ENCODE measurements at regions of chr11 and their contacts with region 1.

Region 1: DNA sequence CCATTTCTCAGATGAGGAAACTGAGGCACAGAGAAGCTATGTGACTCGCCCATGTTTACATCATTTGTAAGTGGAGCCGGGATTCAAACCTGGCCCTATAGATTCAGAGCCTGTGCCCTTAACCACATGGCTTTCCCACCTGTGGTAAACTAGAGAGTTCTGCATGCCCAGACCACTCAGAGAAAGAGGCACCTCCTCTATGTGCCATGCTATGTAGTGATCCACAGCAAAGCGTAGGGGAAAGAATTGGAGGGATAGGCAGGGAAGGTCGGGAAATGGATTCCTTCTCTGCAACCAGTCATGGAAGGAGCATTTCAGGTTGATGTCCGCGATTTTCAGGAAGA is 15.4 kb upstream of the POU2AF2 start:
- DNase-seq: no peak
- ATAC-seq: peak; percentile 35
- H3K4me3 ChIP-seq: peak overlapping the region in 3 of 5 experiments; percentile 32 to 46 (median 36)
- H3K4me3 Mint-ChIP-seq: peak overlapping the region; percentile 79
- H3K27ac ChIP-seq: no peak overlapping the region
- H3K27ac Mint-ChIP-seq: peak overlapping the region; percentile 74
- H3K4me1 ChIP-seq: peaks cover 23 to 24% of the 10 kb centered on the region in 2 donors
- H3K4me1 Mint-ChIP-seq: peaks cover 37% of the 10 kb centered on the region
- H3K27me3 ChIP-seq: no peaks in the 10 kb centered on the region
- H3K27me3 Mint-ChIP-seq: no peaks in the 10 kb centered on the region
- CTCF ChIP-seq: no peak

Region 2: GRCh38 chr11:110199184-110199941 is 1030.7 kb before region 1 on chr11:
- CTCF ChIA-PET with region 1: interaction called, 7 read pairs
- POLR2A ChIA-PET with region 1: no interaction called
- intact Hi-C with region 1: loop called (anchors 1 kb)
- DNase-seq: no peak
- ATAC-seq: no peak
- H3K4me3 ChIP-seq: no peak overlapping the region
- H3K4me3 Mint-ChIP-seq: no peak overlapping the region
- H3K27ac ChIP-seq: no peak overlapping the region
- H3K27ac Mint-ChIP-seq: no peak overlapping the region
- H3K4me1 ChIP-seq: no peaks in the 10 kb centered on the region
- H3K4me1 Mint-ChIP-seq: no peaks in the 10 kb centered on the region
- H3K27me3 ChIP-seq: peaks cover 0 to 16% (median 11%) of the 10 kb centered on the region in 4 experiments
- H3K27me3 Mint-ChIP-seq: peaks cover 38% of the 10 kb centered on the region
- CTCF ChIP-seq: no peak

Region 3: DNA sequence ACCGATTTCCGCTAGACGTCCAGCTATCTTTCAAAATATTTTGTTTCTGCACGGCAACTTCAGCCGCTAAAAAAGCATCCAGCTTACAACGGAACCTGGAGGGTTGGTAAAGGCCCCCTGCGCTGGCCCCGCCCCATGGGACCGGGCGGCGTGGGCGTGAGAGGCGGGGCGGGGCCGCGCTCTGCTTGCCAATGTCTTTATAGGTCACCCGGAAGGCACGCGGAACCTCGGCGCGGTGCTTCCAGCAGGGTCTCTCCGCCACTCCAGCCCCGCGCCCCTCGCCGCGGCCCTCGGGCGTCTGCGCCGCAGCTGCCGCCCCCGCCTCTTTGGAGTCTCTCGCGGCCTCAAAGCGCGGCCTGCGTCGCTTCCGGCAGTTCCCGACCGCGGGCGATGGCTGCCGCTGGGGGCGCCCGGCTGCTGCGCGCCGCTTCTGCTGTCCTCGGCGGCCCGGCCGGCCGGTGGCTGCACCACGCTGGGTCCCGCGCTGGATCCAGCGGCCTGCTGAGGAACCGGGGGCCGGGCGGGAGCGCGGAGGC is 800.3 kb before region 1 on chr11 and contains the start of gene FDX1:
- CTCF ChIA-PET with region 1: interaction called, 68 read pairs
- POLR2A ChIA-PET with region 1: no interaction called
- intact Hi-C with region 1: no loop called
- DNase-seq: peak; percentile 91
- ATAC-seq: peak; percentile 87
- H3K4me3 ChIP-seq: peak within 1 kb of the TSS; percentile 74 to 91 (median 80)
- H3K4me3 Mint-ChIP-seq: peak within 1 kb of the TSS; percentile 98
- H3K27ac ChIP-seq: peak within 1 kb of the TSS; percentile 63 to 81
- H3K27ac Mint-ChIP-seq: peak within 1 kb of the TSS; percentile 95
- H3K4me1 ChIP-seq: peaks cover 22 to 28% of the 10 kb centered on the region in 2 donors
- H3K4me1 Mint-ChIP-seq: peaks cover 36% of the 10 kb centered on the region
- H3K27me3 ChIP-seq: no peaks in the 10 kb centered on the region
- H3K27me3 Mint-ChIP-seq: no peaks in the 10 kb centered on the region
- CTCF ChIP-seq: peak; percentile 71
- total RNA-seq, gene FDX1: 10.0 and 11.2 TPM in 2 replicates

Region 4: GRCh38 chr11:110447897-110448745 is 782.0 kb before region 1 on chr11:
- CTCF ChIA-PET with region 1: interaction called, 56 read pairs
- POLR2A ChIA-PET with region 1: no interaction called
- intact Hi-C with region 1: loop called (anchors 1 kb)
- DNase-seq: peak; percentile 45
- ATAC-seq: no peak
- H3K4me3 ChIP-seq: no peak overlapping the region
- H3K4me3 Mint-ChIP-seq: no peak overlapping the region
- H3K27ac ChIP-seq: no peak overlapping the region
- H3K27ac Mint-ChIP-seq: no peak overlapping the region
- H3K4me1 ChIP-seq: no peaks in the 10 kb centered on the region
- H3K4me1 Mint-ChIP-seq: peaks cover 13% of the 10 kb centered on the region
- H3K27me3 ChIP-seq: no peaks in the 10 kb centered on the region
- H3K27me3 Mint-ChIP-seq: no peaks in the 10 kb centered on the region
- CTCF ChIP-seq: peak; percentile 77

Region 5: GRCh38 chr11:110711776-110712658 is 518.1 kb before region 1 on chr11 and contains the start of gene ARHGAP20:
- CTCF ChIA-PET with region 1: no interaction called
- POLR2A ChIA-PET with region 1: interaction called, 3 read pairs
- intact Hi-C with region 1: loop called (anchors 2 kb)
- DNase-seq: peak; percentile 79
- ATAC-seq: peak; percentile 93
- H3K4me3 ChIP-seq: peak within 1 kb of the TSS; percentile 26 to 86 (median 74)
- H3K4me3 Mint-ChIP-seq: peak within 1 kb of the TSS; percentile 89
- H3K27ac ChIP-seq: peak within 1 kb of the TSS in 1 of 2 donors; percentile 13
- H3K27ac Mint-ChIP-seq: peak within 1 kb of the TSS; percentile 54
- H3K4me1 ChIP-seq: peaks cover 17 to 23% of the 10 kb centered on the region in 2 donors
- H3K4me1 Mint-ChIP-seq: peaks cover 17% of the 10 kb centered on the region
- H3K27me3 ChIP-seq: peaks cover 0 to 41% (median 23%) of the 10 kb centered on the region in 4 experiments
- H3K27me3 Mint-ChIP-seq: peaks cover 47% of the 10 kb centered on the region
- CTCF ChIP-seq: no peak
- total RNA-seq, gene ARHGAP20: 0.58 and 0.91 TPM in 2 replicates

Region 6: GRCh38 chr11:111063726-111064517 is 166.2 kb before region 1 on chr11:
- CTCF ChIA-PET with region 1: no interaction called
- POLR2A ChIA-PET with region 1: no interaction called
- intact Hi-C with region 1: no loop called
- DNase-seq: no peak
- ATAC-seq: no peak
- H3K4me3 ChIP-seq: no peak overlapping the region
- H3K4me3 Mint-ChIP-seq: no peak overlapping the region
- H3K27ac ChIP-seq: no peak overlapping the region
- H3K27ac Mint-ChIP-seq: no peak overlapping the region
- H3K4me1 ChIP-seq: no peaks in the 10 kb centered on the region
- H3K4me1 Mint-ChIP-seq: no peaks in the 10 kb centered on the region
- H3K27me3 ChIP-seq: peaks cover 0 to 3% (median 0%) of the 10 kb centered on the region in 4 experiments
- H3K27me3 Mint-ChIP-seq: no peaks in the 10 kb centered on the region
- CTCF ChIP-seq: no peak

Region 7: DNA sequence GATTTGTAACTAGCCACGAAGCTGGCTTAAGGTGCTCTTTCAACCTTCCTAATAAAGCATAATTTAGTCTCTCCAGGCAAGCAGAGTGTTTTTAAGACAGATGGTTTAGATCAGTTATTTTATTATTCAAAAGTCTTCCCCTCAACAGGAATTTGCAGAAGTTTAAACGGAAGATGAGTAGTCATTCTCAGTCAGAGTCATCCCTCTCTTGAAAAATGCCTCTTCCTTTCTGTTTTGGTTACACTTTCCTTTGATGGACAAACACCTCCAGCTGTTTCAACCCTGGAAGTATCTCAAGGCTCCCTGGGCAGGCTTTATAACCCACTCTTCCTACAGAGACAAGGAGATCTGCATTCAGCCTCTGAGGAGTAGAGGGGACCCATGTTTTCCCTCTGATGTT is 44.8 kb before region 1 on chr11:
- CTCF ChIA-PET with region 1: interaction called, 21 read pairs
- POLR2A ChIA-PET with region 1: no interaction called
- intact Hi-C with region 1: no loop called
- DNase-seq: peak; percentile 22
- ATAC-seq: no peak
- H3K4me3 ChIP-seq: peak overlapping the region in 1 of 5 experiments; percentile 4
- H3K4me3 Mint-ChIP-seq: peak overlapping the region; percentile 42
- H3K27ac ChIP-seq: peak overlapping the region; percentile 59 to 80
- H3K27ac Mint-ChIP-seq: peak overlapping the region; percentile 80
- H3K4me1 ChIP-seq: peaks cover 45 to 51% of the 10 kb centered on the region in 2 donors
- H3K4me1 Mint-ChIP-seq: peaks cover 66% of the 10 kb centered on the region
- H3K27me3 ChIP-seq: no peaks in the 10 kb centered on the region
- H3K27me3 Mint-ChIP-seq: no peaks in the 10 kb centered on the region
- CTCF ChIP-seq: no peak

Region 8: GRCh38 chr11:111429066-111429506 is 199.0 kb after region 1 on chr11:
- CTCF ChIA-PET with region 1: interaction called, 22 read pairs
- POLR2A ChIA-PET with region 1: no interaction called
- intact Hi-C with region 1: no loop called
- DNase-seq: peak; percentile 75
- ATAC-seq: peak; percentile 89
- H3K4me3 ChIP-seq: no peak overlapping the region
- H3K4me3 Mint-ChIP-seq: no peak overlapping the region
- H3K27ac ChIP-seq: no peak overlapping the region
- H3K27ac Mint-ChIP-seq: no peak overlapping the region
- H3K4me1 ChIP-seq: no peaks in the 10 kb centered on the region
- H3K4me1 Mint-ChIP-seq: peaks cover 5% of the 10 kb centered on the region
- H3K27me3 ChIP-seq: peaks cover 0 to 4% (median 0%) of the 10 kb centered on the region in 4 experiments
- H3K27me3 Mint-ChIP-seq: no peaks in the 10 kb centered on the region
- CTCF ChIP-seq: peak; percentile 81